ENCODE measurements at regions of chr10 and their contacts with region 1.

Region 1: DNA sequence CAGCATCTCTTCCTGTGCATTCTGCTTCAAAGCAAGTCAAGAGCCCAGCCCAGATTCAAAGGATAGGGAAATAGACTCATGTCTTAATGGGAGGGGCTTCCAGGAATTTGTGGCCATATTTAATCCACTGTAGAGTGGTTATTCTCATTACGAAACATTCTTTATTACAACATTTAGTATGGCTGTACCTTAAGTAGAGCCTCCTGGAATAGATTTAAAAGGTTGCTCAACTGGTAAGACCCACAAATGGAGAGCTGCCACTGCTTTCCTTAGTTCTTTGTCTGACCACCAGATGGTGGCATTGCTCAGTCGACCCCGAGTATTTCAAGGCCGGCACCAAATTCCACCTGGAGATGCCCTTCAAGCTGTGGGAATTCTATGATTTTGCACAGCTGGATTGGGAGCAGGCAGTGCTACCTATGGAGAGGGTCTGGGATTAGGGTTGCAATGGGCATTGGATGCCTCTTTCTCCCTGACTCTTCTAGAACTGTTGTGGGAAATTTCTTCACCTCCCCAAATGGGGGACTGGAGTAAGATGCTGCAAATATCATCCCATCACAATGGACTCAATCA is 102.2 kb downstream of the RBM20 start:
- DNase-seq: no peak
- H3K4me3 ChIP-seq: peak overlapping the region in 1 of 4 donors; percentile 31
- H3K27ac ChIP-seq: peak overlapping the region; percentile 25 to 68 (median 44)
- H3K4me1 ChIP-seq: peaks cover 6 to 21% (median 9%) of the 10 kb centered on the region in 3 donors
- H3K27me3 ChIP-seq: no peaks in the 10 kb centered on the region
- CTCF ChIP-seq: peak; percentile 82 to 94 (median 86)
- POLR2A ChIP-seq: no peak

Region 2: GRCh38 chr10:110336111-110336721 is 410.1 kb before region 1 on chr10:
- intact Hi-C with region 1: no loop called
- DNase-seq: no peak
- H3K4me3 ChIP-seq: peak overlapping the region in 1 of 4 donors; percentile 10
- H3K27ac ChIP-seq: peak overlapping the region; percentile 23 to 68 (median 55)
- H3K4me1 ChIP-seq: peaks cover 11 to 22% (median 16%) of the 10 kb centered on the region in 3 donors
- H3K27me3 ChIP-seq: no peaks in the 10 kb centered on the region
- CTCF ChIP-seq: peak in 2 of 6 experiments; percentile 33 to 54
- POLR2A ChIP-seq: no peak

Region 3: DNA sequence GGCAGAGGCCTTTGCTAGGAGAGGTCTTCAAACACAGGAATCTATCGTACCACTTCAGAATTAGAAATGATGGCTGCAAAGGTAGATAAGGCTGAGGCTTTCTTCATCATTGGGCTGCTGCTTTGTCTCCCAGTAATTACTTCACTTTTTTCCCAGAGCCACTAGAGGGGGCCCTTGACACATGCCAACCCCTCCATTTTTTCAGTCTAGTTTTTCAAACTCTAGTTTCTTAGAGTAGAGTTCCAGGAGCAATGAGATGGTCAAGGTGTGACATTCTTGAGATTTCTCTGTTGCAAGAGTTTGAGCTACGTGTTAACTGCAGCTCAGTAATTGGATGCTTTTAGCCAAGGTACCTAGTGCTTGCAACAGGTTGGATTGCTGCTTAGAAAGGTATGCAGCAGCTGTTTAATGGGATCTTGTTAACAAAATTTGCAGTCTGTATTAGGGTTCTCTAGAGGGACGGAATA is 136.0 kb before region 1 on chr10:
- intact Hi-C with region 1: loop called (anchors 10 kb)
- DNase-seq: no peak
- H3K4me3 ChIP-seq: no peak overlapping the region
- H3K27ac ChIP-seq: no peak overlapping the region
- H3K4me1 ChIP-seq: no peaks in the 10 kb centered on the region
- H3K27me3 ChIP-seq: peaks cover 0 to 3% (median 0%) of the 10 kb centered on the region in 4 donors
- CTCF ChIP-seq: peak; percentile 53 to 78 (median 62)
- POLR2A ChIP-seq: no peak

Region 4: DNA sequence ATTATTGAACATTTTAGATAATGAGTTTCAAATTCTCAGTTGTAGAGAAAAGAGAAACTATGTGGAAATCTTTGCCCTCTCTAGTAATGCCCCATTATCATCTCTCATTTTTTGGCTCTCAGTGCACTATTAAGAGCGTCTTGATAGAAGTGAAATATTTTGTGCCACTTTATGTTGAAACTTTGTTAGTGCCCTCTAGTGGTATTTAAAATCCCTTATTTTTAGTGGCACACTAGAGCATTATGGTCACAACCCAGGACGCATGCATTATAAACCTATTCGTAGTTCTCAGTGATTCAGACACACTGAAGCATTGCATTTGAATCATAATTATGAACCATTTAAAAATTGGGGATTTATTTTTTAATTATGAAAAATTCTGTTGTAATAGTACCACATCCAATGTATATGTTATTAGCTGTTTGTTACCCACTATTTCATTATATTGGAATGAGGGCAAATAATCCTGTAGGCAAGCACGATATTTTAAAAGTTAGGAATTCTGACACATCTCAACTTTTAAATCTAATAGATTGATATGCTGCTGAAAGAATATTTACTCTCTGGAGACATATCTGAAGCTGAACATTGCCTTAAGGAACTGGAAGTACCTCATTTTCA is 147.3 kb after region 1 on chr10:
- intact Hi-C with region 1: loop called (anchors 10 kb)
- DNase-seq: no peak
- H3K4me3 ChIP-seq: no peak overlapping the region
- H3K27ac ChIP-seq: peak overlapping the region in 1 of 4 donors; percentile 36
- H3K4me1 ChIP-seq: peaks cover 0 to 28% (median 0%) of the 10 kb centered on the region in 3 donors
- H3K27me3 ChIP-seq: no peaks in the 10 kb centered on the region
- CTCF ChIP-seq: peak; percentile 57 to 68 (median 62)
- POLR2A ChIP-seq: no peak